ENCODE measurements at regions of chr3 and their contacts with region 1.

Region 1: DNA sequence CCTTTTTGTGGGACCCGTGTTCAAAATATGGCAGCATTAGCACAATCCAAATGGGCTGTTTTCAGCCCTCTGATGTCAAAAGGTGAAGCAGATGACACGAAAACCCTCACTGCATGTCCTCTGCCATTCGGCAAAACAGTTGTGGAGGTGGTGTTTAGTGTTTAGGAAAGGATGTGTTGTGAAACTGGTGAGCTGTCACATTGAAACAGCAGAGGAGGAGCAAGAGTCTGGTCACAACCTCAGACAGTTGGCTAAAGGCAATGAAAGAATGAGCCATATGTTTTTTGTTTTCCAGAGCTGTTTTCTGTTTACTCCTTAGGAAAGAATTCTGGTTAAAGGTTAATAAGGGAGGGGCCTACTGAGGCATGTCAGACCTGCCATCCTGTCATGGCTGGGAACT is 140.7 kb downstream of the VPS8 start:
- DNase-seq: no peak
- H3K4me3 ChIP-seq: no peak overlapping the region
- H3K27ac ChIP-seq: no peak overlapping the region
- H3K27me3 ChIP-seq: no peaks in the 10 kb centered on the region
- CTCF ChIP-seq: no peak

Region 2: DNA sequence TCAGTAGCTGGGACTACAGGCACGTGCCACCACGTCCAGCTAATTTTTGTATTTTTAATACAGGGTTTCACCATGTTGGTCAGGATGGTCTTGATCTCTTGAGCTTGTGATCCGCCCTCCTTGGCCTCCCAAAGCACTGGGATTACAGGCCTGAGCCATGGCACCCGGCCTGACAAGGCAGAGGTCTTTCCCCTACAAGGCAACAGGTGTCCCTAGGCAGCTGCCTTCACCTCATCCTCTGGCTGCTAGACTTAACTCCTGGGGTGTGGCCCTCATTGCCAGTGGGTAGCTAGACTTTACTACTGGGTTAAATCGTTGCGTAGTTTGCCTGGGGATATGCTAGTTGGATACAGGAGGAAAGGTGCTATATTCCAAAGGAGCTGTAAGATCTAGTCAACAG is 491.5 kb before region 1 on chr3:
- CTCF ChIA-PET with region 1: no interaction called
- POLR2A ChIA-PET with region 1: interaction called, 12 read pairs
- DNase-seq: no peak
- H3K4me3 ChIP-seq: no peak overlapping the region
- H3K27ac ChIP-seq: no peak overlapping the region
- H3K27me3 ChIP-seq: no peaks in the 10 kb centered on the region
- CTCF ChIP-seq: no peak

Region 3: DNA sequence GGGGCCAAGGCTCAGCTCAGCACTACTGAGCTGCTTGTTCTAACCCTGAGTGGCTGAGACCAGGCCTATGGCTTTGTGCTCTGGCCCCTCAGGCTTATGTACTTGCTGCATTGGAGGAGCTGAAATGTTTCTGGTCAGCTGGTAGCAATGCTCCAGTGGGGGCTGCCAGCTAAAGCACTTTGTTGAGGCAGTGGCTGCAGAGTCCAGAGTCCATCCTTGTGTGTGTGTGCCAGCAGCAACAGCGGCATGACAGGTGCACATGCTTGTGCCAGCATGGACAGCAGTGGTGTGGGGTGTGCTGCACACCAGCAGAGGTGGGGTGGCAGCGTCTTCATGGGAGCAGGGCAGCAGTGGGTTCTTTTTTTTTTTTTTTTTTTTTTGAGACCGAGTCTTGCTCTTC is 28.4 kb after region 1 on chr3:
- CTCF ChIA-PET with region 1: no interaction called
- POLR2A ChIA-PET with region 1: interaction called, 17 read pairs
- DNase-seq: no peak
- H3K4me3 ChIP-seq: no peak overlapping the region
- H3K27ac ChIP-seq: no peak overlapping the region
- H3K27me3 ChIP-seq: no peaks in the 10 kb centered on the region
- CTCF ChIP-seq: no peak

Measured in AG04450 (cell line).